ENCODE measurements at regions of chr14 and their contacts with region 1.

Region 1: GRCh38 chr14:50003213-50004031 is 110.5 kb downstream of the ARF6 start:
- DNase-seq: peak; percentile 84 to 92 (median 87)
- ATAC-seq: peak in 3 of 4 donors; percentile 47 to 78 (median 56)
- H3K4me3 ChIP-seq: peak overlapping the region; percentile 28 to 80 (median 58)
- H3K27ac ChIP-seq: peak overlapping the region; percentile 43 to 92 (median 80)
- H3K4me1 ChIP-seq: peaks cover 0 to 60% (median 48%) of the 10 kb centered on the region in 12 donors
- H3K27me3 ChIP-seq: no peaks in the 10 kb centered on the region
- CTCF ChIP-seq: peak in 7 of 12 donors; percentile 8 to 50 (median 30)
- POLR2A ChIP-seq: peak in 1 of 2 donors; percentile 61

Region 2: GRCh38 chr14:49512147-49512551 is 491.3 kb before region 1 on chr14:
- intact Hi-C with region 1: no loop called
- DNase-seq: no peak
- ATAC-seq: peak in 2 of 4 donors; percentile 18 to 62
- H3K4me3 ChIP-seq: no peak overlapping the region
- H3K27ac ChIP-seq: no peak overlapping the region
- H3K4me1 ChIP-seq: no peaks in the 10 kb centered on the region
- H3K27me3 ChIP-seq: no peaks in the 10 kb centered on the region
- CTCF ChIP-seq: no peak
- POLR2A ChIP-seq: no peak

Region 3: GRCh38 chr14:49879683-49880204 is 123.7 kb before region 1 on chr14:
- intact Hi-C with region 1: loop called in 1 of 10 experiments (anchors 10 kb)
- DNase-seq: peak in 1 of 5 donors; percentile 27
- ATAC-seq: peak in 3 of 4 donors; percentile 71 to 81 (median 72)
- H3K4me3 ChIP-seq: no peak overlapping the region
- H3K27ac ChIP-seq: peak overlapping the region in 1 of 12 donors; percentile 62
- H3K4me1 ChIP-seq: peaks cover 0 to 36% (median 0%) of the 10 kb centered on the region in 12 donors
- H3K27me3 ChIP-seq: no peaks in the 10 kb centered on the region
- CTCF ChIP-seq: peak; percentile 50 to 70 (median 54)
- POLR2A ChIP-seq: no peak

Region 4: GRCh38 chr14:50023671-50024490 is 20.5 kb after region 1 on chr14:
- intact Hi-C with region 1: no loop called
- DNase-seq: no peak
- ATAC-seq: peak in 3 of 4 donors; percentile 43 to 85 (median 60)
- H3K4me3 ChIP-seq: no peak overlapping the region
- H3K27ac ChIP-seq: peak overlapping the region in 10 of 12 donors; percentile 8 to 81 (median 43)
- H3K4me1 ChIP-seq: peaks cover 0 to 20% (median 5%) of the 10 kb centered on the region in 12 donors
- H3K27me3 ChIP-seq: no peaks in the 10 kb centered on the region
- CTCF ChIP-seq: no peak
- POLR2A ChIP-seq: no peak

Region 5: DNA sequence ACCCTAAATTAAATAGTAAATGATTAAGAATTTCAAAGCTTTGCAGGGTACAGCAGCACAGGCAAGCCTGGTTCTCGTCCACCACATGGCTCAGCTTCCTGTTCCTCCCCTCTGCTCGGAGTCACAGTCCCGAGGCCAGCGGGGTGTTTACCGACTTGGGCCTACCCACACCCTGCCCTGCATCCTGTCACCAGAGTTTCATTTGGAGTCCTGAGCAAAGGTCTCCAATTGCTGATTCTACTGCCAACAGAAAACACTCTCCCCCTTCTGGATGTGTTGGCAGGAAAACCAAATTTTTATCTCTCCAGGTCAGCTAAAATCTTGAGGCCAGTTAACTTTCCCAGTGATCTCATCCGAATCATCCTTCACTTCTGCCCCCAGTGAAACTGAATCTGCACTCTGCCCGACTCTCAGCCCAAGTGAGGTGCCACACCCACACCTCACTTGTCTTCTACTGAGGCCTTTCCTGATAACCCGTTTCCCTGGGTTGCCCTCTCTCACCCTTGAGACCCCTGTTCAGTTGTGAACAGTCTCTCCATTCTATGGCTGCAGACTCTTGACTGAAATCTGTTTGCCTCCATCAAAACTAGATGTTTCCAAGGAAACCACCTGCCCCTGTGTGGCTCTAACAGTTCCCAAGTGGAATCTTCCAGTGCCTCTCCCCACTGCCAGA is 41.8 kb after region 1 on chr14:
- intact Hi-C with region 1: loop called in 3 of 10 experiments (anchors 5 kb)
- DNase-seq: peak; percentile 79 to 88 (median 84)
- ATAC-seq: peak; percentile 88 to 94 (median 91)
- H3K4me3 ChIP-seq: no peak overlapping the region
- H3K27ac ChIP-seq: peak overlapping the region; percentile 58 to 95 (median 73)
- H3K4me1 ChIP-seq: peaks cover 0 to 66% (median 35%) of the 10 kb centered on the region in 12 donors
- H3K27me3 ChIP-seq: no peaks in the 10 kb centered on the region
- CTCF ChIP-seq: peak in 2 of 12 donors; percentile 9 to 15
- POLR2A ChIP-seq: no peak

Region 6: GRCh38 chr14:50101417-50101816 is 98.0 kb after region 1 on chr14:
- intact Hi-C with region 1: loop called in 5 of 10 experiments (anchors 5 to 10 kb)
- DNase-seq: no peak
- ATAC-seq: no peak
- H3K4me3 ChIP-seq: no peak overlapping the region
- H3K27ac ChIP-seq: no peak overlapping the region
- H3K4me1 ChIP-seq: peaks cover 0 to 8% (median 2%) of the 10 kb centered on the region in 12 donors
- H3K27me3 ChIP-seq: no peaks in the 10 kb centered on the region
- CTCF ChIP-seq: no peak
- POLR2A ChIP-seq: no peak

Region 7: GRCh38 chr14:50109342-50109741 is 105.9 kb after region 1 on chr14:
- intact Hi-C with region 1: loop called in 5 of 10 experiments (anchors 5 to 10 kb)
- DNase-seq: no peak
- ATAC-seq: no peak
- H3K4me3 ChIP-seq: no peak overlapping the region
- H3K27ac ChIP-seq: no peak overlapping the region
- H3K4me1 ChIP-seq: peaks cover 0 to 6% (median 2%) of the 10 kb centered on the region in 12 donors
- H3K27me3 ChIP-seq: no peaks in the 10 kb centered on the region
- CTCF ChIP-seq: no peak
- POLR2A ChIP-seq: no peak

Region 8: DNA sequence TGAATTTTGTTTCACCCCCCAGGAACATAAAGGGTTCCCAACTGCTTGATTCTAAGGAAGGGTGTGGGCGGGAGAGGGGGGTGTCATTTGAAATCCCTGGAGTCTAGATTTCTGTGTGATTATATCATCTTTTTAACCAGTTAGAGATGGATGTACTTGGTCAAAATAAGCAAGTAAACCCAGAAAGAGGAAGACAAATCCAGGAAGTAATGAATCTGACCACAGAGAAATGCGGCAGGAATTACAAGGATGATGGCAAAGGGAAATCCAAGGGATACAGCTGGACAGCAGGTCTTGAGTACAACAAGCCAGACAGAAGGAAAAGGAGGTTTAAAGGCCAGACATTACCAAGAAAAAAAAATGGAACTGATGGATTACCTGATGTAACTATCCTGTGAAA is 347.6 kb after region 1 on chr14:
- intact Hi-C with region 1: no loop called
- DNase-seq: no peak
- ATAC-seq: peak in 1 of 4 donors; percentile 20
- H3K4me3 ChIP-seq: no peak overlapping the region
- H3K27ac ChIP-seq: no peak overlapping the region
- H3K4me1 ChIP-seq: peaks cover 0 to 23% (median 4%) of the 10 kb centered on the region in 12 donors
- H3K27me3 ChIP-seq: no peaks in the 10 kb centered on the region
- CTCF ChIP-seq: no peak
- POLR2A ChIP-seq: no peak

Measured in heart left ventricle (tissue), 16 donors.